CD4-positive, alpha-beta memory T cell (primary cell): ENCODE measurements at regions of chr17 and their contacts with region 1.

Region 1: GRCh38 chr17:57130761-57131461 is 45.9 kb downstream of the AKAP1 start:
- DNase-seq: peak; percentile 70 to 77 (median 72)
- H3K4me3 ChIP-seq: no peak overlapping the region
- H3K4me3 Mint-ChIP-seq: peak overlapping the region in 2 of 8 donors; percentile 9 to 34
- H3K27ac ChIP-seq: no peak overlapping the region
- H3K27ac Mint-ChIP-seq: no peak overlapping the region
- H3K4me1 ChIP-seq: no peaks in the 10 kb centered on the region
- H3K4me1 Mint-ChIP-seq: peaks cover 0 to 5% (median 5%) of the 10 kb centered on the region in 4 donors
- H3K27me3 ChIP-seq: no peaks in the 10 kb centered on the region
- H3K27me3 Mint-ChIP-seq: no peaks in the 10 kb centered on the region

Region 2: GRCh38 chr17:57747221-57748017 is 616.5 kb after region 1 on chr17:
- CTCF ChIA-PET with region 1: interaction called, 9 read pairs
- POLR2A ChIA-PET with region 1: no interaction called
- intact Hi-C with region 1: loop called (anchors 1 kb)
- DNase-seq: peak; percentile 45 to 57 (median 49)
- H3K4me3 ChIP-seq: no peak overlapping the region
- H3K4me3 Mint-ChIP-seq: no peak overlapping the region
- H3K27ac ChIP-seq: no peak overlapping the region
- H3K27ac Mint-ChIP-seq: peak overlapping the region in 1 of 7 donors; percentile 37
- H3K4me1 ChIP-seq: no peaks in the 10 kb centered on the region
- H3K4me1 Mint-ChIP-seq: peaks cover 0 to 1% (median 0%) of the 10 kb centered on the region in 4 donors
- H3K27me3 ChIP-seq: no peaks in the 10 kb centered on the region
- H3K27me3 Mint-ChIP-seq: peaks cover 3 to 9% of the 10 kb centered on the region in 2 donors

Region 3: DNA sequence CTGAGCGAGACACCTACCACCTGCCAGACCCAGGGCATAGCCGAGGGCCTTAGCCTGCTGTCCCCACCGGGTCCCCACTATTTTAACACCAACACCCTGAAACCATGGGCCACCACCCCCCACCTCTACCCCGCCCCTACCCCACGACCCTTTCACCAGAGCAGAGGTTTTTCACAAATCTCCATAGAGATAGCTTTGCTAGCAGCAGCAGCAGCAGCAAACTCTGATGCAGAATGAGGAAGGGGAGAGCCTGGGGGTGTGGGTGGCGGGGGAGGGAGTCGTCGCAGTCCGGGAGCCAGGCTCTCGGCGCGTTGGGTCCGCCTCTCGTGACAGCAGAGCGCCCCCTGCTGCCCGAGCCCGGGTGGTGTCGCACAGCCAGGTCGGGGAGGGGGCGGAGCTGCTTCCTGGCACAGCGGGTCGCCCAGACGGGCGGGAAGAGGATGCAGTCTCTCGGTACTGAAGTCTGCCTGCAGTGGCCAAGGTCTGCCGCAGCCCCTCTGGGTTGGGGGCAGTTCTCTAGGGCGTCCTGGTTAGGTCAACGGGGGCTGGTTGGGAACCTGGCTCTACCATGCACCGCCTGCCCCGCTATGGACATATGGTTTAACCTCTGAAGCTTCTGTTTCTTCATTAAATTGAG is 652.3 kb after region 1 on chr17:
- CTCF ChIA-PET with region 1: interaction called, 10 read pairs
- POLR2A ChIA-PET with region 1: no interaction called
- intact Hi-C with region 1: loop called (anchors 1 kb)
- DNase-seq: peak; percentile 58 to 66 (median 64)
- H3K4me3 ChIP-seq: no peak overlapping the region
- H3K4me3 Mint-ChIP-seq: peak overlapping the region in 2 of 8 donors; percentile 2 to 23
- H3K27ac ChIP-seq: no peak overlapping the region
- H3K27ac Mint-ChIP-seq: no peak overlapping the region
- H3K4me1 ChIP-seq: peaks cover 11% of the 10 kb centered on the region
- H3K4me1 Mint-ChIP-seq: peaks cover 0 to 2% (median 0%) of the 10 kb centered on the region in 4 donors
- H3K27me3 ChIP-seq: peaks cover 8% of the 10 kb centered on the region
- H3K27me3 Mint-ChIP-seq: peaks cover 20 to 25% of the 10 kb centered on the region in 2 donors

Region 4: DNA sequence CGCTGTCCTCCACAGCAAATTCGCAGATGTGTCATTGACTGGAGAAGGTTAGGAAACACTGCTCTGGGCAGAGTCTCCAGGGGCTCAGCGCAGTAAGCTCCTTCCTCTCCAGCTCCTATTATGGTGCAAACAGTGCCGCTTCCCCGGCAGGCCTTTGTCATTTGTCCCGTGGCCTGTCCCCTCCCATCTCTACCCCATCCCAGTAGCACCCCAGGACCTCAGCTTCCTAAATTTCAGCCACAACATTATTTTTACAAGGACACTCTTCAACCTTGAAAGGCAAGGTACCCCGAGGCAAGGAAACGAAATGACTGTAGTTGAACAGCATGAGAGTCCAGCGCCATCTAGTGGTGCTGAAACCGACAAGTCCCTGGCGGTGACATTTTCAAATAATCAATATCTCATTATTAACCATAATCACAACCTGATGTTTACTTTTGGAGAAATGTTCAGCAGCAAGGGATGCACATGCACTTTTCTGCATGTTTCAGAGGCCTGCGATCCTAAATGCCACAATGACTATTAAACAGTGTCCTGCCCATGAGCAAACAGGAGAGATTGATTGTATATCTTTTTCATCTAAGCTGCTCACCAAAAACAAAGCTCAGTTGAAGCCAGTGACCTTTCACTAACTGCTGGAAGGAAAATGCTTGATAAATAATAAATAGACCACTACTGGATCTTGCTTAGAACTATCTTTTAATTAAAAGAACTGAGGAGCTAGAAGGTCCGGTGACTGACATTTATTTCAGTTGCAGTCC is 702.4 kb after region 1 on chr17:
- CTCF ChIA-PET with region 1: interaction called, 29 read pairs
- POLR2A ChIA-PET with region 1: no interaction called
- intact Hi-C with region 1: no loop called
- DNase-seq: peak; percentile 58 to 65 (median 61)
- H3K4me3 ChIP-seq: no peak overlapping the region
- H3K4me3 Mint-ChIP-seq: no peak overlapping the region
- H3K27ac ChIP-seq: no peak overlapping the region
- H3K27ac Mint-ChIP-seq: no peak overlapping the region
- H3K4me1 ChIP-seq: peaks cover 10% of the 10 kb centered on the region
- H3K4me1 Mint-ChIP-seq: peaks cover 0 to 5% (median 0%) of the 10 kb centered on the region in 4 donors
- H3K27me3 ChIP-seq: no peaks in the 10 kb centered on the region
- H3K27me3 Mint-ChIP-seq: no peaks in the 10 kb centered on the region